OCI-LY7 (cell line): ENCODE measurements at regions of chr15 and their contacts with region 1.

Region 1: GRCh38 chr15:85412956-85413854 is 32.8 kb downstream of the AKAP13 start:
- DNase-seq: peak; percentile 90
- H3K4me3 ChIP-seq: peak overlapping the region; percentile 49
- H3K27ac ChIP-seq: peak overlapping the region; percentile 71
- H3K4me1 ChIP-seq: peaks cover 72% of the 10 kb centered on the region
- CTCF ChIP-seq: peak; percentile 54; the same call in 1 of the 2 replicates

Region 2: GRCh38 chr15:85394552-85395333 is 18.5 kb before region 1 on chr15:
- CTCF ChIA-PET with region 1: no interaction called
- POLR2A ChIA-PET with region 1: interaction called, 335 read pairs
- intact Hi-C with region 1: no loop called
- DNase-seq: no peak
- H3K4me3 ChIP-seq: no peak overlapping the region
- H3K27ac ChIP-seq: no peak overlapping the region
- H3K4me1 ChIP-seq: peaks cover 74% of the 10 kb centered on the region
- CTCF ChIP-seq: no peak

Region 3: GRCh38 chr15:85430406-85431204 is 17.4 kb after region 1 on chr15:
- CTCF ChIA-PET with region 1: no interaction called
- POLR2A ChIA-PET with region 1: interaction called, 12 read pairs
- intact Hi-C with region 1: no loop called
- DNase-seq: no peak
- H3K4me3 ChIP-seq: no peak overlapping the region
- H3K27ac ChIP-seq: no peak overlapping the region
- H3K4me1 ChIP-seq: peaks cover 15% of the 10 kb centered on the region
- CTCF ChIP-seq: no peak

Region 4: GRCh38 chr15:85500729-85501128 is 87.5 kb after region 1 on chr15:
- CTCF ChIA-PET with region 1: no interaction called
- POLR2A ChIA-PET with region 1: no interaction called
- intact Hi-C with region 1: no loop called
- DNase-seq: no peak
- H3K4me3 ChIP-seq: no peak overlapping the region
- H3K27ac ChIP-seq: no peak overlapping the region
- H3K4me1 ChIP-seq: peaks cover 55% of the 10 kb centered on the region
- CTCF ChIP-seq: no peak

Region 5: DNA sequence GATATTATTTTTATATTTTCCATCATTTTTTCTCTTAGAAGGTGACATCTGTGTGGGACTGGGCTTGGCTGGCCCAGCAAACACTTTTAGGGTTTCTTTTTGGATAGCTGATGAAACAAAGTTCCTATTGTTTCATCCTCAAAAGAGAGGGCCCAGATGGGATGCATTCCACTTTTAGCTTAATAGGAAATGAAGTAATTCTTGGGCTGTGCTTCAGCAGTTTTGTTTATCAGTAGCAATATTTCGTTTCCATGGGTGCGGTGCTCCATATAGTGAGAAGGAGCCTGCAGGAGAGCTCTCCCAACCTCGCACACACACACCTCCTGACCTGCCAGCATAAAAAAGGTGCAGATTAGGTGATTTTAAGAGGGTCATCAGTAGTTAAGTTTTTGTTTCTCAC is 114.7 kb after region 1 on chr15:
- CTCF ChIA-PET with region 1: no interaction called
- POLR2A ChIA-PET with region 1: no interaction called
- intact Hi-C with region 1: no loop called
- DNase-seq: no peak
- H3K4me3 ChIP-seq: no peak overlapping the region
- H3K27ac ChIP-seq: no peak overlapping the region
- H3K4me1 ChIP-seq: peaks cover 23% of the 10 kb centered on the region
- CTCF ChIP-seq: no peak